ENCODE measurements at regions of chr17 and their contacts with region 1.

Region 1: DNA sequence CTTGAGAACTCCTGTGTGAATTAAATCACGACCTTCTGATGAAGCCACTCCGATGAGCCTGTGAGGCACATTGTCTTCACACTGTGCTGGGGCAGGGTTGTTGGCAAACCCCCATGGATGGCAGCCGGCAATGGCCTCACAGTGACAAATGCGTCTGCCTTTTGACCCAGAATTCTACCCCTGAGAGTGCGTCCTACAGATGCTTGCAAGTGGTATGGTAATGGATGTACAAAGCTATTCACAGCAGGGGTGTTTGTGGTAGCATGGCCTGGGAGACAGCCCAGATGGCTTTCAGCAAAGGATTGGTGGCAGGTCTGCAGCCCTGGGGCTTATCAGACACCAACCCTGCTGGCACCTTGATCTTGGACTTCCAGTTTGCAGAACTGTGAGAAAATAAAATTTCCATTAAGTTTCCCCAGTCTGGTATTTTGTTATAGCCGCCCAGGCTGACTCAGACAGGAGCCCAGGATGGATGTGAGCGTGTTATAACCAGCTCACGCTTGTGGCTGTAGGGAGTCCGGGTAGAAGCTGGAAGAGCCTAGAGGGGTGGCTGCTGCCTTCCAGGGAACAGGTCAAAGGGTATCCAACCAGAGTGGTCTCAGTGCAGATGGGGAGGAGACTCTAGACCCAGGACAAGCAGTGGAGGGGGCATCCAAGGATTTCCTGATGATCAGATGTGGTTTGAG is 10.1 kb downstream of the AFMID start:
- DNase-seq: peak; percentile 12
- H3K4me3 ChIP-seq: no peak overlapping the region
- H3K27ac ChIP-seq: peak overlapping the region; percentile 1
- H3K4me1 ChIP-seq: peaks cover 7% of the 10 kb centered on the region
- H3K27me3 ChIP-seq: no peaks in the 10 kb centered on the region
- CTCF ChIP-seq: no peak

Region 2: DNA sequence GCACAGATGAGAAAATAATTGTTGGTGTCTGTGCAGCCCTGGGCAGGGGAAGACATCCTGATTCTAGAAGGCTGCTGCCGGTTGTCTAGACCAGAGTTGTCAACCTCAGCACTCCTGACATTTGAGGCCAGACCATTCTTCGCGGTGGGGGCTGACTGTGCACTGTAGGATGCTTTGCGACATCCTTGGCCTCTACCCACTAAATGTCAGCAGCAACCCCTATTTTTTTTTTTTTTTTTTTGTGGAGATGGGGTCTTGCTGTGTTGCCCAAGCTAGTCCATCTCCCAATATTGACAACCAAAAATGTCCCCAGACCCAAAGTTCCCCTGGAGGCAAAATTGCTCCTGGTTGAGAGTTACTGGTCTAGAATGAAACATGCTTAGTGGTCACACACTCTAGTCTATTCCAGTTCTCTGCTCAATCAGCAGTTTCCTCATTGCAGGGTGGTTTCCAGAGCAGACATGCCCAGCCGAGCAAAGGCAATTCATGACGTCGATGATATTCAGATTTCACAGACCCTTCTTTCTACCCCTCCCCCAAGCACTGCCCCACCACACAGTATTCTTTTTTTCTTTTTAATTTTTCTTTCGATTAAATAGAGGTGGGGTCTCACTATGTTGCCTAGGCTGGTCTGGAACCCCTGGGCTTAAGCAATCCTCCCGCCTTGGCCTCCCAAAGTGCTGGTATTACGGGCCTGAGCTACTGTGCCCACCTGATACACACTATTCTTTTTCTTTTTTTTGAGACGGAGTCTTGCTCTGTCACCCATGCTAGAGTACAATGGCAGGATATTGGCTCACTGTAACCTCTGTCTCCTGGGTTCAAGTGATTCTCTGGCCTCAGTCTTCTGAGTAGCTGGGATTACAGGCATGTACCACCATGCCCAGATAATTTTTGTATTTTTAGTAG is 42.1 kb before region 1 on chr17:
- CTCF ChIA-PET with region 1: no interaction called
- dilution Hi-C with region 1: loop called (anchors 5 kb)
- in situ Hi-C with region 1: no loop called
- intact Hi-C with region 1: no loop called
- DNase-seq: peak; percentile 78
- H3K4me3 ChIP-seq: no peak overlapping the region
- H3K27ac ChIP-seq: no peak overlapping the region
- H3K4me1 ChIP-seq: peaks cover 12% of the 10 kb centered on the region
- H3K27me3 ChIP-seq: no peaks in the 10 kb centered on the region
- CTCF ChIP-seq: no peak

Region 3: DNA sequence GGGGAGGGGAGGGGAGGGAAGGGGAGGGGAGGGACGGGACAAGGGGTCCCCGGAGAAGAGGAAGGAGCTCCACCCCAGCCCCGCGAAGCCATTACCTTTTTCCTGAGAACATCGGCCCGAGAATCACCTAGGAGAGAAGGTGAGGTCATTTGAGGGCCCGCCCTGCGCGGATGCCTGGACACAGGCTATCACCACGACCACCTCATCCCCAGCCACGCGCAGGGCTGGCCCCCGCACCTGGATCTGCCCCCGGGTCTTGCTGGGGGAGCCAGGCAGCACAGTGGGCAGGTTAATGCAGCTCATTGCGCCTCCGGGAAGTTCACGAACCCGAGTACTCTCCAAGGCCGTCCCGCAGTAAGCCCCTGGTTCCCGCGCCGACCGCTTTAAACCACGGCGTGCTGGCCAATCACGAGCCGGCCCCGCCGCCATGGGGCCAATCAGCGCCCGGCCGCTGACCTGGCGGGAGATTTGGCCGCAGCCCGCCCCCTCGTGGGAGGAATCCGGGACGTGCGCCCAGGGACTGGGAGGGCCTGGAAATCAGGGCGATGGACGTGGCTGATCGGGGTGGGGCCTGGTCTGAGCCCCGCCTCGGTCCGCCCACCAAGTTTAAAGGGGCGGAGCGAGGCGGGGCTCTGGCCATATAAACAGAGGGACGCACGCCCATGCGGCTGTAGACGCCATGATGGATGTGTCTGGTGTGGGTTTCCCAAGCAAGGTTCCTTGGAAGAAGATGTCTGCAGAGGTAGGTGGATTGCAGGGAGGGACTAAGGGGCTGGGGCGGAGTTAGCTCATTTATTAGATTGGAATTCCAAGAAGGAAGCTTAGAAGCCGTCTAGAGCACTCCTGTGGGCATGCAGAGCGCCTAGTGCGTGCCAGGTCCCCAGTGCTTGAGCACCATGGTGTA is 10.3 kb before region 1 on chr17 and contains the starts of genes AFMID and TK1:
- CTCF ChIA-PET with region 1: no interaction called
- dilution Hi-C with region 1: no loop called
- in situ Hi-C with region 1: no loop called
- intact Hi-C with region 1: loop called (anchors 1 kb)
- DNase-seq: peak; percentile 97
- H3K4me3 ChIP-seq: peak within 1 kb of the TSS; percentile 66 to 75 (median 71)
- H3K27ac ChIP-seq: peak within 1 kb of the TSS; percentile 57
- H3K4me1 ChIP-seq: peaks cover 13% of the 10 kb centered on the region
- H3K27me3 ChIP-seq: no peaks in the 10 kb centered on the region
- CTCF ChIP-seq: peak; percentile 43 to 86
- total RNA-seq, gene AFMID: 16.5 to 32.5 TPM
- total RNA-seq, gene TK1: 7.7 to 79.5 TPM

Region 4: DNA sequence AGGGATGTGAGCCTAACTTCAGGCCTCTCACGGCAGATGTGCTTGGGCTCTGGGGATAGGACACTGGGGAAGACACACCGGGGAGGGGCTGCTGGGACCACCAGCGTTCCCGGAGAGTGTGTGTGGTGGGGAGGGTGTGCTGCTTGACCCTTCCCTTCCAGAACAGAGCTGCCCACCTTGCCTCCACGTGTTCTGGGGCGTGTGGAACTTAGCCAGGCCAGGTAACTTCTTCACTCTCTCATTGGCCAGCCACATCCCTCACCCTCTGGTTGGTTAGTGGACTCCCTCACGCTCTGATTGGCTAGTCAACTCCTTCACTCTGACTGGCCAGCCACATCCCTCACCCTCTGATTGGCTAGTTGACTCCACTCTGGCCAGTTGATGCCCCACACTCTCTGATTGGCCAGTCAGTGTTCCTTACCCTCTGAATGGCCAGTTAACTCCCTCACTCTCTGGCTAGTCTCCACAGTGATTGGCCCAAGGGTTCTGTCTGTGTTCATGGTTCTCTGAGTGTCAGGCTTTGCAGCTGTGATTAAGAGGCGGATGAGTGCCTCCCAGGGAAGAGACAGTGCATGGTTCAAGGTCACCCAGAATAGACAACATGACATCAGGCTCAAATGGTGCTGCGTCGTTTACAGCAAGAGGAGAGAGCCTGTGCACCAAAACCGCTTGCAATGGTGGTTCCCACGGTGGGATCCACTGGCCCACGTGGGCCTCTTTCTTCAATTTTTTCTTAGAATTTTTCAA is 44.2 kb after region 1 on chr17:
- CTCF ChIA-PET with region 1: no interaction called
- dilution Hi-C with region 1: no loop called
- in situ Hi-C with region 1: no loop called
- intact Hi-C with region 1: no loop called
- DNase-seq: peak; percentile 24
- H3K4me3 ChIP-seq: no peak overlapping the region
- H3K27ac ChIP-seq: no peak overlapping the region
- H3K4me1 ChIP-seq: no peaks in the 10 kb centered on the region
- H3K27me3 ChIP-seq: no peaks in the 10 kb centered on the region
- CTCF ChIP-seq: no peak

Measured in mammary epithelial cell (primary cell).